Colonic mucosa (tissue), 4 donors: ENCODE measurements at regions of chr1 and their contacts with region 1.

Region 1: GRCh38 chr1:35726450-35727433 is 8.1 kb upstream of the C1orf216 start:
- DNase-seq: peak; percentile 40
- H3K4me3 ChIP-seq: no peak overlapping the region
- H3K27ac ChIP-seq: no peak overlapping the region
- H3K4me1 ChIP-seq: no peaks in the 10 kb centered on the region
- H3K27me3 ChIP-seq: no peaks in the 10 kb centered on the region
- CTCF ChIP-seq: peak; percentile 87

Region 2: GRCh38 chr1:35451125-35451528 is 275.6 kb before region 1 on chr1:
- intact Hi-C with region 1: loop called (anchors 10 kb)
- DNase-seq: peak; percentile 79
- H3K4me3 ChIP-seq: no peak overlapping the region
- H3K27ac ChIP-seq: no peak overlapping the region
- H3K4me1 ChIP-seq: no peaks in the 10 kb centered on the region
- H3K27me3 ChIP-seq: no peaks in the 10 kb centered on the region
- CTCF ChIP-seq: peak; percentile 80

Region 3: DNA sequence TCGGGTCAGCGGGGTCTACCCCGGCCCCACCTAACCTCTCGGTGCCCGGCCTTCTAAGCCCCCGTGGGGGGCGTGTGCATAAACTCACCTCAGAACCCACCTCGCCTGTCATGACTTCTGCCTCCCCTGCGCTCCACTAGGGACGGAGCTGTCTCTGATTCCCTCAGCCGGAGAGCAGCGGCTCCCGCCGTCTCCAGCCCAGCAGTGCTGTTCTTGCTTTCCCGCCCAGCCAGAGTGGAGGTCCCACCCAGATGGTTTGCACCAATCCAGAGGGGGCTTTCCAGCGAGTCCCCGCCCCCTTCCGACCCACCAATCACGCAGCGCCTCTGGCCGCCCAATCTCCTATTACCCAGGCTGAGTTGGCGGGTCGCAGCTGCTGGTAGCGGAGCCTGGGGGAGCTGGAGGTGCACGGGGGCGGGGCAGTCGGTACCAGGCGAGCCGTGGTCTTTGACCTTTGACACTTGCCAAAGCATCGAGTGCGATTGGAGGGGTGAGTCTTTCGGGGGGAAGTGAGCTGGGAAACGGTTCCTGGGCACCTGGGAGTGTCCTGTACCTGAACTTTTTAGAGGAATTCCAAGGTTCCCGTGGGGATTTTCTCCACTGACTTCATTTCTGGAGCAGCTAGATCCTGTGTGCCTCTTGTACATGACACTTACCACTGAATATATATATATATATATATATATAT is 43.2 kb after region 1 on chr1 and contains the start of gene CLSPN:
- intact Hi-C with region 1: loop called (anchors 5 kb)
- DNase-seq: peak; percentile 97
- H3K4me3 ChIP-seq: peak within 1 kb of the TSS; percentile 92
- H3K27ac ChIP-seq: peak within 1 kb of the TSS; percentile 76
- H3K4me1 ChIP-seq: no peaks in the 10 kb centered on the region
- H3K27me3 ChIP-seq: no peaks in the 10 kb centered on the region
- CTCF ChIP-seq: no peak
- total RNA-seq, gene CLSPN: 3.1 to 27.7 TPM